Activated CD4-positive, alpha-beta T cell treated with anti-CD3 and anti-CD28 coated beads, Interleukin-2, amount 10 ng/mL, durations not matched to agents 24 days and 14 days (primary cell): ENCODE measurements at regions of chr17 and their contacts with region 1.

Region 1: GRCh38 chr17:80791758-80792284 is 199.8 kb upstream of the CHMP6 start:
- DNase-seq: peak; percentile 85
- H3K4me3 Mint-ChIP-seq: peak overlapping the region; percentile 79
- H3K27ac Mint-ChIP-seq: peak overlapping the region; percentile 97
- H3K4me1 Mint-ChIP-seq: peaks cover 77% of the 10 kb centered on the region
- H3K27me3 Mint-ChIP-seq: no peaks in the 10 kb centered on the region

Region 2: DNA sequence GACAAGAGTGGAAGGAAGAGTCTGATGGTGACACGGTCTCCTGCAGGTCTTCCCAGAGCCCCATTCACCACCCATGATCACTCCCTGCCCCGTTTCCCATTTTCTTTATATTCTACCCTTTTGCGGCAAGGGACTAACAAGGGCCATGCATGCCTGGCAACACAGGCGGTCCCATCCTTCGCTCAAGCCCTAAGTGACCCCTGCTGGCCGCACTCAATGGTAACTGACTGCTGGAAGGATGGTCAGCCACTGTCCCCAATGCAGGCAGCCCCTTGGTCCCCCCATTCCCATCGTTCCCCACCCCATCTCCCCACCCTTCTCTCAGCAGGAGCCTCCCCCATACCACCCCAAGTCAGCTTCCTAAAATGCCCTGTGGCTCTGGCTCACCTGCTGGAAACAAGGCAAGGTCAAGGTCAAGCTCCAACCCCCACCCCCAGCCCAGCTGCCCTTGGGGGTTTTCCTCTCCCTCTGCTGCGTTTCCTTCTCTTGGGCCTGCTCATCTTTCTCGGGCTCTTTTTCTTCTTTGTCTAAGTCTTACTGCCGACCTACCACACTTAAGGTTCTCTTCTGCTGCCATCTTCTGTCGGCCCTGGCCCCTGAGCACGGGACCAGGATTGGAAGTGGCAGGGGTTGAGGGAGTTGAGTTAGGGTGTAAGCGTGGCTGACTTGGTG is 131.2 kb before region 1 on chr17:
- intact Hi-C with region 1: no loop called
- DNase-seq: no peak
- H3K4me3 Mint-ChIP-seq: no peak overlapping the region
- H3K27ac Mint-ChIP-seq: no peak overlapping the region
- H3K4me1 Mint-ChIP-seq: peaks cover 50% of the 10 kb centered on the region
- H3K27me3 Mint-ChIP-seq: no peaks in the 10 kb centered on the region

Region 3: GRCh38 chr17:80673152-80673920 is 118.5 kb before region 1 on chr17:
- intact Hi-C with region 1: loop called (anchors 5 kb)
- DNase-seq: peak; percentile 81
- H3K4me3 Mint-ChIP-seq: peak overlapping the region; percentile 58
- H3K27ac Mint-ChIP-seq: peak overlapping the region; percentile 72
- H3K4me1 Mint-ChIP-seq: peaks cover 77% of the 10 kb centered on the region
- H3K27me3 Mint-ChIP-seq: no peaks in the 10 kb centered on the region

Region 4: DNA sequence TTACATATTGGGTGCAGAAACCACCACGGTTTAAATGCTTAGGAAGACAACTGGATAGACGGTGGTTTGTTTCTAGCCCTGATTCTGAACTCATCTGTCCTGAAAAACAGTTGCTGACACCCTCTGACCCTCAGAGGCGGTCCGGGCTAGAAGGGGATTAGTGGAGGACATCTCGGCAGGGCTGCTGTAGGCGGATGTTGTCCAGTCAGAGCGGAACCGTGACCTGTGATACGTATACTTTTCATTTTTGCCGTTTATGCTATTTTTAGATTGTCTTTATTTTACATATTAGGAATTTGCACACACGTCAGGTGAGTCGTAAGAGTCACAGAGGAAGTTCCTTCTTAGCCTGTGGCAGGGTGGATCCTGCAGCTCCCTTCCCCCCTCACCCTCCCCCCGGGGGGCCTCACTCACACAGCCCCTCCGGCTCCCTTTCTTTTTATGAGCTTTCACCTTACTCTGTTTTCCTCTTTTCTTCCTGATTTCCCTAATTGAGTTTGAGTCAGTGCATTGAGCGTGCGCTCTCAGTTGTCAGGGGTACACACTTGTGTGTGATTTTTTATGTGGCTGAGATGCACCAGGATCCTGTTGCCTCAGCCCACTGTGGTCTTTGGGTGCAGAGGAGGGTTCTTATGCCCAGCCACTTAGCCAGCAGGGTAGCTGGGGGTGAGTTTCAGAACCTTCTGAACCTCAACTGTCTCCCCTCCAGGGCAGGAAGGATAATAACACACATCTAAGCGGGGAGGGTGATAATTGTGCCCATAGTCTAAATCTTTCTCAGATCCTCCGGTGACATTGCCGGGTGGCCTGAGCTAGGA is 11.2 kb before region 1 on chr17:
- intact Hi-C with region 1: loop called (anchors 1 kb)
- DNase-seq: peak; percentile 83
- H3K4me3 Mint-ChIP-seq: peak overlapping the region; percentile 82
- H3K27ac Mint-ChIP-seq: peak overlapping the region; percentile 92
- H3K4me1 Mint-ChIP-seq: peaks cover 79% of the 10 kb centered on the region
- H3K27me3 Mint-ChIP-seq: no peaks in the 10 kb centered on the region

Region 5: GRCh38 chr17:80832888-80833583 is 41.2 kb after region 1 on chr17:
- intact Hi-C with region 1: loop called (anchors 1 kb)
- DNase-seq: peak; percentile 95
- H3K4me3 Mint-ChIP-seq: peak overlapping the region; percentile 85
- H3K27ac Mint-ChIP-seq: peak overlapping the region; percentile 96
- H3K4me1 Mint-ChIP-seq: peaks cover 61% of the 10 kb centered on the region
- H3K27me3 Mint-ChIP-seq: no peaks in the 10 kb centered on the region

Region 6: GRCh38 chr17:80876950-80877728 is 85.3 kb after region 1 on chr17:
- intact Hi-C with region 1: loop called (anchors 1 kb)
- DNase-seq: peak; percentile 89
- H3K4me3 Mint-ChIP-seq: peak overlapping the region; percentile 88
- H3K27ac Mint-ChIP-seq: peak overlapping the region; percentile 99
- H3K4me1 Mint-ChIP-seq: peaks cover 57% of the 10 kb centered on the region
- H3K27me3 Mint-ChIP-seq: no peaks in the 10 kb centered on the region

Region 7: GRCh38 chr17:80899402-80900268 is 107.8 kb after region 1 on chr17:
- intact Hi-C with region 1: loop called (anchors 2 kb)
- DNase-seq: peak; percentile 95
- H3K4me3 Mint-ChIP-seq: no peak overlapping the region
- H3K27ac Mint-ChIP-seq: peak overlapping the region; percentile 68
- H3K4me1 Mint-ChIP-seq: peaks cover 51% of the 10 kb centered on the region
- H3K27me3 Mint-ChIP-seq: no peaks in the 10 kb centered on the region